Activated CD4-positive, alpha-beta T cell treated with anti-CD3 and anti-CD28 coated beads, Interleukin-2, amount 10 ng/mL, durations not matched to agents 24 days and 14 days (primary cell): ENCODE measurements at regions of chr7 and their contacts with region 1.

Region 1: GRCh38 chr7:24757353-24758275 is at the start of gene GSDME:
- DNase-seq: peak; percentile 86
- H3K4me3 Mint-ChIP-seq: peak within 1 kb of the TSS; percentile 94
- H3K27ac Mint-ChIP-seq: peak within 1 kb of the TSS; percentile 84
- H3K4me1 Mint-ChIP-seq: peaks cover 32% of the 10 kb centered on the region
- H3K27me3 Mint-ChIP-seq: peaks cover 36% of the 10 kb centered on the region
- total RNA-seq, gene GSDME: 9.6 and 10.4 TPM in 2 replicates

Region 2: DNA sequence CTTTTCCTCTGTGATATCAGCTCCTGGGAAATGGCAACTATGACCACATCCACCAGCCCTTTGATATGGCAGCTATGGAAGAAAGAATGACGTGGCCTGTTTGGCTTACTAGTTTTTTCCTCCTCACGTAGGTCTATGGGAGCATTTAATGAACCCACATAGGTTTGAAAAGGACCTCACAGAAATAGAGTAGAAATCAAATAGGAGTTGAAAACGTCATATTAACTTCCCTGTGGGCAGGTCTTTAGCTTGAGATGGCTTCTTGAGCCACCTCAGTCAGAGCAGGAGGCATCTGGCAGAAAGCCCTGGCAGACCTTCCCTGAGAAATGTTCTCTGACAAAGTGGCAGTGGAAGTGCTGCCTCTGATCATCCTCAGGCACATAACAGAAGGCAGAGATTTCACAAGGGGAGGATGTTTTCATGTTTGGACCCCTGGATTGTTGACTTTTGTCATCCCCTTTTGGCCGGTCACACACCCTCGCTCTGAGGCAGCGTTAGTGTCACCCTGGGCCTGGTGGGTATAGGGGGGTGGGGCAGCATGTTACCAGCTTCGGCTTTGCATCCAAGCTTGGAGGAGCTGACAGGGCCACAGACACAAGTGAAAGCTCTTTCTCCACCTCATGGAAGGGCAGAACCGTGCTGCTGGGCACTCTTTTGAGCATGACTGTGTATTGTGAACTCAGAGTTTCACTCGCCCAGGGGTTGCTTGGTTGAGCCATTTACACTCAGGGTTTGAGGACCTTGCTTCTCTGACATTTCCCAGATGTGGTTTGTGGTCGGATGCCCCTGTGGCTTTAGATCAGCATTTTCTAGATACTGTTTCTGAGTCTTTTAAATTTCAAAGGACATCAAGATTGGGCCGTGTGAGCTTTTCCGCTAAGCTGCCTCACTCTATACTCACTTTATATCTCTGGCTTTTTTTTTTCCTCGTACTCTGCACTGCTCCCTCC is 863.4 kb before region 1 on chr7:
- intact Hi-C with region 1: loop called (anchors 2 kb)
- DNase-seq: peak; percentile 83
- H3K4me3 Mint-ChIP-seq: peak overlapping the region; percentile 69
- H3K27ac Mint-ChIP-seq: peak overlapping the region; percentile 88
- H3K4me1 Mint-ChIP-seq: peaks cover 29% of the 10 kb centered on the region
- H3K27me3 Mint-ChIP-seq: peaks cover 16% of the 10 kb centered on the region

Region 3: GRCh38 chr7:24715661-24716479 is 41.7 kb before region 1 on chr7:
- intact Hi-C with region 1: no loop called
- DNase-seq: peak; percentile 64
- H3K4me3 Mint-ChIP-seq: no peak overlapping the region
- H3K27ac Mint-ChIP-seq: no peak overlapping the region
- H3K4me1 Mint-ChIP-seq: peaks cover 7% of the 10 kb centered on the region
- H3K27me3 Mint-ChIP-seq: no peaks in the 10 kb centered on the region

Region 4: DNA sequence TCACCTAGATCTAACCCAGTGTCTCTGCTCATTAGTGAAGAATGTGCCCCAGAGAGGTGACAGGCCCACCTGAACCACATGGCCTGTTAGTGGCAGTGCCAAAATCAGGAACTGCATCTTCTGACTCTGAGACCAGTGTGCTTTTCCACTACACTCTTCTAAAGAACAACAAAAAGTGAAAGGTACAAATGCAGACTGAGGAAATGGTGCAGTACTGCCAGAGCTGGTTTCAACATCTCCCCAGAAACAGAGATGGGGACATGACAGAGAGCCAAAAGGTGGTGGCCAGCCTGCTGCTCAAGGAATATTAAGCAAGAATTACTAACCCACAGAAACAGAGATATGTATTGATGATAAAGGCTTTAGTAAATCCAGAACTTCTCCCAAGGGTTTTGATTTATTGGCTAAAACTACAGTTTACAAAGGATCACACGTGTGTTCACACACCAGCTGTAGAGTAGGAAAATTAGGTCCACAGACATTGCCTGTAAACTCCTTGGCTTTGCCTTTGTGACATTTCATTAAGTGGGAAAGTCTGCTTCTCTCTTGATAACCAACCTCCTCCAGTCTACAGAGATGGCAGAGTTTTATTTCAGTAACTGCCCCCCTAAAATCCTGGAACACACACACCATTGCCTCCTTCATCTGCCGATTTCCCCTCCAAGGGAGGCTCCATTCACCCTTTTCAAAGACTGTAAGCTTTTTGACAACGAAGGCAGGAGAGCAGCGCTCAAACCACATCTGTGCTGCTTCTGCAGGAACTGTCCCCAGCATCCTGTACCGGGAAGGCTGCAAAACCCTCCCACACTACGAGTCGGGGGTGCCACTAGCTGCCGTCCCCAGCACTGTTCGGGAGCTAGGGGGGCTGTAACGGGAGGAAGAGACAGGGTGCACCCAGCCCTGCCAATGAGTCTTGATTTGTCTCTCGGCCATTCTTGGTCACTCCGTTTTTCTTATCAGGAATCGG is 30.2 kb before region 1 on chr7:
- intact Hi-C with region 1: loop called (anchors 1 kb)
- DNase-seq: peak; percentile 68
- H3K4me3 Mint-ChIP-seq: peak overlapping the region; percentile 39
- H3K27ac Mint-ChIP-seq: peak overlapping the region; percentile 45
- H3K4me1 Mint-ChIP-seq: peaks cover 35% of the 10 kb centered on the region
- H3K27me3 Mint-ChIP-seq: peaks cover 3% of the 10 kb centered on the region

Region 5: GRCh38 chr7:24786941-24787340 is 29.3 kb after region 1 on chr7:
- intact Hi-C with region 1: loop called (anchors 2 kb)
- DNase-seq: peak; percentile 62
- H3K4me3 Mint-ChIP-seq: no peak overlapping the region
- H3K27ac Mint-ChIP-seq: peak overlapping the region; percentile 51
- H3K4me1 Mint-ChIP-seq: peaks cover 13% of the 10 kb centered on the region
- H3K27me3 Mint-ChIP-seq: no peaks in the 10 kb centered on the region

Region 6: DNA sequence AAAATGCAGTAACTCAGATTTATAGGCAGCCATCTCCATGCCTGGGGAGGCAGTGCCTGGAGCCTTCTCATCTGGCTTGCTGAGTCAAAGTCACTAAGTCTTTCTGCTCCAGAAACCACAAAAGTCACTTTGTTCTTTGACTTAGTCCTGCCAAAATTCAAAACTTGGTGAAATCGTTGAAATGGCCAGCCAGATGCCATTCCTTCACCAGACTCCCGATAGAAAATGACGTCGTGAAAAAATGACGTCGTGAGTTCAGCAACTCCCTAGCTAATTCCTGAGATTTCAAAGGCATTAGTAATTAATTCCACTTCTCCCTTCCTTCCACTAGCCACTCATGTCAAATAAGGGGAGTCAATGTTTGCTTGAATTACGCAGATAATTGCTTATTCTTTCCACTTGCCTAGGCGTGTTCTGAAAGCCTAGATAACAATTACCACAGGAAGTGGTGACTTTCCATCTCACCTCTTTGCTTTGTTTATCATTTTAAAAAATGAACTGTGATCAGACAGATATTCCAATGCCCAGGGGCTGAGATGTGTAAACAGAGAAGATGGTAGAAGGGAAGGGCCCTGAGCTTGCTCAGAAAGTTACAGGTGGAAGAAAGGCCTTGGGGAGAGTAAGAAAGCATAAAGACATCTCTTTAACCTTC is 270.9 kb after region 1 on chr7:
- intact Hi-C with region 1: loop called (anchors 1 kb)
- DNase-seq: peak; percentile 82
- H3K4me3 Mint-ChIP-seq: peak overlapping the region; percentile 48
- H3K27ac Mint-ChIP-seq: peak overlapping the region; percentile 87
- H3K4me1 Mint-ChIP-seq: peaks cover 45% of the 10 kb centered on the region
- H3K27me3 Mint-ChIP-seq: peaks cover 10% of the 10 kb centered on the region